ENCODE measurements at regions of chr19 and their contacts with region 1.

Region 1: DNA sequence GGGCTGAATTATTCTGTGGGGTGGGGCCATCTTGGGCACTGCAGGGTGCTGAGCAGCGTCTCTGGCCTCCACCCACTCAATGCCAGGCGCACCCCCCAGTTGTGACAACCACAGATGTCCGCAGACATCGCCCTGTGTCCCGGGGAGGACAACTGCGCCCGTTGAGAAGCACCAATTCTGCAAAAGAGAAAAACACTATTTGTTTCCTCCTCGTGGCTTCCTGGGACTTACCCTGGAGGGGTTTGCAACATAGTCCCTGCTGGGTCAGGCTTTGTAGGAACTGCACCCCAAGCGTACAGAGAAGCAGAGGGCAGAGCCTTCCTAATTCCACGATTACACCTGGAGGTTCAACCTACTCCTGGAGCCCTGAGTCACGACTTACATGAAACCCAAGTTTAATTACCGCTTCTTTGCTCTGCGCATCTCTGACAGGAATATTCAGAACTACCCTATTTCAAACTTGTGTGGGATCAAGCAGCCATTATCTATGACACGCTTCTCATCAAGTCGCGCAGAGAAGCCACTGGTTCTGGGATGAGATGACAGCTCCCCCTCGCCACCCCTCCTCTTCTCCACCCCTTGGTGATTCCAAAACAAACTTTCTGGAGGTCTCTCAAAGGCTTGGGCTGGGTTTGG is 11.1 kb upstream of the SLC39A3 start:
- DNase-seq: no peak
- ATAC-seq: no peak
- H3K4me3 ChIP-seq: no peak overlapping the region
- H3K27ac ChIP-seq: no peak overlapping the region
- H3K4me1 ChIP-seq: peaks cover 17% of the 10 kb centered on the region
- H3K27me3 ChIP-seq: no peaks in the 10 kb centered on the region
- CTCF ChIP-seq: no peak
- EP300 ChIP-seq: no peak
- POLR2A ChIP-seq: no peak
- RAD21 ChIP-seq: no peak

Region 2: DNA sequence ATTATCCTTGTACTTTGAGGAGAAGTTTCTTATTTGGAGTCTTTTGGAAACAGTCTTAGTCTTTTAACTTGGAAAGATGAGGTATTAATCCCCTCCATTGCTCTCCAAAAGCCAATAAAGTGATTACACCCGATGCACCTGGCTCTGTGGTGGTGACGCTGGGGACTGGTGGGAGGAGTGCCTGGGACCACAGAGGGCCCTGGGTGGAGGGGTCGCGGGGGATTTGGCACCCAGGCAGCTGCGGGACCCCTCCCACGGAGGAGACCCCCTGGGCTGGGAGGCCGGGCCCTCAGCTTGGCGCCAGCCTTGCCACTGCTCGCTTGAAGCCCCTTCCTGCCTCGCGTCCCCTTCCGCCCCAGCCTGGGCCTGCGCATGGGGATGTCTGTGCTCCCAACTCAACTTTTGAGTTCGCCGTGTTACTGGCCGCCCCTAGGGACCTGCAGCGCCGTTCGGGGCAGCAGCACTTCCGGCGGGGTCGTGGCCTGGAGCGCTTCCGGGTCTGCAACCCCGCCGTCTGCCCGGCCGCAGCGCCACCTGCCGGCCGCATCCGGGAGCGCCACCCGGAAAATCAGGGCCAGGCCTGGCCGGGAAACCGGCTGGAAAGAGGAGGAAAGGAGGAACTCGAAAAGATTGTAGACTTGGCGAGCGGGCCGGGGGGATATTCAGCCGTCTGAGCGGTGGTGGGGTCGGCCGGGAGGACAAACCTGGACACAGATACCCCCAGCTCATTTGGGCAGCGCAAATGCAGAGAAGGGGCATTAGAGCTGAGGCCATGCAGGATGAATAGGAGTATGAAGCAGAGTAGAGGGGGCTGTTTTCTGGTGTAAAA is 477.4 kb before region 1 on chr19:
- CTCF ChIA-PET with region 1: no interaction called
- POLR2A ChIA-PET with region 1: no interaction called
- RAD21 ChIA-PET with region 1: no interaction called
- SMC1A ChIA-PET with region 1: no interaction called
- in situ Hi-C with region 1: no loop called
- intact Hi-C with region 1: no loop called
- DNase-seq: peak; percentile 65
- ATAC-seq: peak; percentile 71
- H3K4me3 ChIP-seq: peak overlapping the region; percentile 95
- H3K27ac ChIP-seq: peak overlapping the region; percentile 49
- H3K4me1 ChIP-seq: peaks cover 9% of the 10 kb centered on the region
- H3K27me3 ChIP-seq: no peaks in the 10 kb centered on the region
- CTCF ChIP-seq: peak; percentile 89 to 94 (median 92)
- EP300 ChIP-seq: no peak
- POLR2A ChIP-seq: peak; percentile 85
- RAD21 ChIP-seq: peak; percentile 68

Region 3: GRCh38 chr19:2469102-2469914 is 281.6 kb before region 1 on chr19:
- CTCF ChIA-PET with region 1: no interaction called
- POLR2A ChIA-PET with region 1: no interaction called
- RAD21 ChIA-PET with region 1: no interaction called
- SMC1A ChIA-PET with region 1: no interaction called
- in situ Hi-C with region 1: loop called (anchors 5 kb)
- intact Hi-C with region 1: loop called (anchors 10 kb)
- DNase-seq: no peak
- ATAC-seq: peak; percentile 86
- H3K4me3 ChIP-seq: no peak overlapping the region
- H3K27ac ChIP-seq: no peak overlapping the region
- H3K4me1 ChIP-seq: peaks cover 8% of the 10 kb centered on the region
- H3K27me3 ChIP-seq: no peaks in the 10 kb centered on the region
- CTCF ChIP-seq: no peak
- EP300 ChIP-seq: no peak
- POLR2A ChIP-seq: no peak
- RAD21 ChIP-seq: no peak

Region 4: GRCh38 chr19:2653710-2654707 is 96.9 kb before region 1 on chr19:
- CTCF ChIA-PET with region 1: interaction called, 125 read pairs
- POLR2A ChIA-PET with region 1: no interaction called
- RAD21 ChIA-PET with region 1: interaction called, 45 read pairs
- SMC1A ChIA-PET with region 1: interaction called, 50 read pairs
- in situ Hi-C with region 1: loop called (anchors 5 kb)
- intact Hi-C with region 1: no loop called
- DNase-seq: no peak
- ATAC-seq: no peak
- H3K4me3 ChIP-seq: no peak overlapping the region
- H3K27ac ChIP-seq: no peak overlapping the region; the same call in 1 of the 2 replicates
- H3K4me1 ChIP-seq: peaks cover 18% of the 10 kb centered on the region
- H3K27me3 ChIP-seq: no peaks in the 10 kb centered on the region
- CTCF ChIP-seq: no peak
- EP300 ChIP-seq: no peak
- POLR2A ChIP-seq: no peak
- RAD21 ChIP-seq: no peak

Region 5: DNA sequence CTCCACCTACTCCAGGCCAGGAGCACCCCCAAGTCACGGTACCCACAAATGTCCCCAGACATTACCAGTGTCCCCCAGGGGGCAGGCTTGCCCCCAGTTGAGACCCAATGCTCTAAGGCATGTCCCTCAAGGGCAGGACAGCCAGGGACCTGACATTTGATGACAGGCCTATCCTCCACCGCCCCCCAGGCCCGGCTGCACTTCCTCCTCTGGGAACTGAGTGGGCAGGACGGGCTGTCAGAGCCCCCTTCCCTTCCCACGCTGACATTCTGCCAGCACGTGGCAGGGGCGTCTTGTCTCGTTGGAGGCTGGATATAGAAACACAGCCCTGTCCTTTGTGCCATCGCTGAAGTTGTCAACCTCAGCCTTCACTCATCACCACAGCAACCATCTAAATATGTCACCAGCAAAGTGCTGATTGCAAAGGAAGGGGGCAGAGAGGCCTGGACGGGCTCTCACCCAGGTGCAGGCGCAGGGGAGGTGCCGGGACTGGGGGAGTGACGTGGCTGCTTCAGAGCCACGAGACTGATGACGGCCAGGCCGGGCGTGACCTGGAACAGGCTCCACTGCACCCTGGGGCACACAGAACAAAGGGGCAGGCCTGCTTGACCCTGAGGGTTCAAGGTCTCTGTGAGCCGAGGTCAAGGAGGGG is 86.9 kb before region 1 on chr19:
- CTCF ChIA-PET with region 1: interaction called, 8 read pairs
- POLR2A ChIA-PET with region 1: no interaction called
- RAD21 ChIA-PET with region 1: no interaction called
- SMC1A ChIA-PET with region 1: interaction called, 3 read pairs
- in situ Hi-C with region 1: no loop called
- intact Hi-C with region 1: loop called (anchors 1 kb)
- DNase-seq: no peak
- ATAC-seq: peak; percentile 92
- H3K4me3 ChIP-seq: no peak overlapping the region
- H3K27ac ChIP-seq: peak overlapping the region; percentile 47
- H3K4me1 ChIP-seq: peaks cover 23% of the 10 kb centered on the region
- H3K27me3 ChIP-seq: no peaks in the 10 kb centered on the region
- CTCF ChIP-seq: peak in 2 of 3 experiments; percentile 38 to 39; a peak in 3 of 6 replicates
- EP300 ChIP-seq: peak in 1 of 2 experiments; percentile 50; a peak in 1 of 4 replicates
- POLR2A ChIP-seq: no peak
- RAD21 ChIP-seq: peak; percentile 67

Region 6: GRCh38 chr19:2702162-2703076 is 48.5 kb before region 1 on chr19 and contains the start of gene GNG7:
- CTCF ChIA-PET with region 1: interaction called, 7 read pairs
- POLR2A ChIA-PET with region 1: interaction called, 4 read pairs
- RAD21 ChIA-PET with region 1: interaction called, 7 read pairs
- SMC1A ChIA-PET with region 1: interaction called, 4 read pairs
- in situ Hi-C with region 1: no loop called
- intact Hi-C with region 1: loop called (anchors 5 kb)
- DNase-seq: no peak
- ATAC-seq: peak; percentile 96
- H3K4me3 ChIP-seq: peak within 1 kb of the TSS; percentile 88
- H3K27ac ChIP-seq: peak within 1 kb of the TSS; percentile 46
- H3K4me1 ChIP-seq: peaks cover 27% of the 10 kb centered on the region
- H3K27me3 ChIP-seq: no peaks in the 10 kb centered on the region
- CTCF ChIP-seq: no peak
- EP300 ChIP-seq: no peak
- POLR2A ChIP-seq: peak; percentile 88
- RAD21 ChIP-seq: no peak
- polyA plus RNA-seq, gene GNG7: 3.7 to 5.1 TPM

Region 7: DNA sequence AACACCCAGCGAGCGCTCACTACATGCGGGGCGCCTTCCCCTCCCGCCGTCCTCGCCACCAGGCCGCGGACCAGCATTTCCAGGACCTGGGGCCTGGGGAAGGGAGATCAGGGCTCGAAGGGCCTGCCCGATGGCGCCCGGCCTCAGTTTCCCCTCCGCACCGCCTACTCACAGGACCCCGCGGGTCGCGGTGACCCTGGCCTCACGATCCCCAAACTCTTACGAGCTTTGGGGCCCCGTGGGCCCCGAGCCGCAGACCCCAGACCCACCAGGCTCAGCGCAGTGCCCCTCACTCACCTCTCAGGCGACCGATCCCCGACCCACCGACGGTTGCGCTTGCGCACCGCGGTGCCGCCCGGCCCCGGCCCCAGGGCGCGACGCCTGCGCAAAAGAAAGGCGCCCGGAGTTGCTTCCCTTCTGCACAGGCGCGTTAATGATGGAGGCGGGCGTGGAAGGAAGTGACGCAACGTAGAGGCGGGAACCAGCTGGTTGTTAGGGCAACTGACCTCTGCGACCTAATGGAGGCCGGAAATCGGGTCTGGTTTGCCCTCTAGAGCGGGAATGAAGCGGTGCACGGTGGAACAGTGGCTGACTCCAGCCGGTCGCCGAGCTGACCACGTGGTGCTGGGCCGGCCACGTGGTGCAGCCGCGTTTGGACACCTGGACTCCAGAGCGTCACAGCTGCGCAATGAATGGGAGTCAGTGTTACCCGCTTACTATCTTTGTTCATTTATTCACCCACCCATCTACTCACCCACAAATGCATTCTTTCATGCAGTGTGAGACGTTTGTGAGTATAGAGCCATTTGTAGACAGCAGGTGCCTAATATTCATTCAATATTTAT is 32.2 kb after region 1 on chr19 and contains the start of gene SGTA:
- CTCF ChIA-PET with region 1: interaction called, 6 read pairs
- POLR2A ChIA-PET with region 1: no interaction called
- RAD21 ChIA-PET with region 1: no interaction called
- SMC1A ChIA-PET with region 1: interaction called, 6 read pairs
- in situ Hi-C with region 1: no loop called
- intact Hi-C with region 1: loop called (anchors 5 kb)
- DNase-seq: peak; percentile 98
- ATAC-seq: peak; percentile 86
- H3K4me3 ChIP-seq: peak within 1 kb of the TSS; percentile 99
- H3K27ac ChIP-seq: peak within 1 kb of the TSS; percentile 85
- H3K4me1 ChIP-seq: peaks cover 19% of the 10 kb centered on the region
- H3K27me3 ChIP-seq: no peaks in the 10 kb centered on the region
- CTCF ChIP-seq: peak; percentile 42 to 67 (median 50); a peak in 5 of 6 replicates
- EP300 ChIP-seq: peak; percentile 33 to 50; a peak in 1 of 4 replicates
- POLR2A ChIP-seq: peak; percentile 88
- RAD21 ChIP-seq: no peak
- polyA plus RNA-seq, gene SGTA: 2.0 to 3.1 TPM

Measured in GM12878 (cell line).